Posterior vena cava (tissue), 2 donors: ENCODE measurements at regions of chr2 and their contacts with region 1.

Region 1: GRCh38 chr2:191555092-191555742 is 122.7 kb upstream of the NABP1 start:
- DNase-seq: peak; percentile 88

Region 2: GRCh38 chr2:190693533-190694232 is 861.5 kb before region 1 on chr2:
- intact Hi-C with region 1: no loop called
- DNase-seq: no peak

Region 3: GRCh38 chr2:191691016-191691735 is 136.0 kb after region 1 on chr2:
- intact Hi-C with region 1: loop called in 1 of 2 experiments (anchors 5 kb)
- DNase-seq: no peak

Region 4: DNA sequence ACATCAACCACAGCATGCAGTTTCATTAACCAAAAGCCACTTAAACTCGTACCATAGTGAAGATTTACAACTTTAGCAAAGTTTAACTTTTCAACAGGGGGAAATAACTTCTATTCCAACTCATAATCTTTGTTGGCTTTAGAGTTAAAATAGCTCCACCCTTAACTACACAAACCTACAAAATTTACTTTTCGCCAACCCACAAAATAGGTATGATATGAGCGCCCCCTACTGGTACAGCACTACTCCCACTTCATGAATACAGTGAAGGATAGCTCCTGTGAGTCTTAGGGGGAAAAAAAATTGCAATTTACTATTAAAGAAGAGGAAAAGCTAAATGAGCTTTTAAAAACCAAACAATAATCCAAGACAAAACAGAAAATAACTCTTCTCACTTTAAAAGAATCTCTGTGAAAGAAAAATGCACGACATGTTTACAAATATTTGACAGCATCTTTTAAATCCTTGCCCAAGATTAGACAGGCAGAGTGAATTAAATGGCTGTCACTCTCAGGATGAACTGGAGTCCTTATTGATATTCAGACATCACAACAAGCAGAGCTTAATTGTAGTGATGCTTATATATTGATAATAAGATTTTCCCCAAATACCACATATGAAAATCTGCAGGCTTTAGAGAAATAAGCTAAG is 607.3 kb after region 1 on chr2:
- intact Hi-C with region 1: loop called in 1 of 2 experiments (anchors 10 kb)
- DNase-seq: no peak